GM10248 (cell line): ENCODE measurements at regions of chr7 and their contacts with region 1.

Region 1: GRCh38 chr7:148079206-148080080 is 511.1 kb upstream of the C7orf33 start:
- DNase-seq: no peak
- CTCF ChIP-seq: no peak

Region 2: GRCh38 chr7:148095066-148095465 is 15.6 kb after region 1 on chr7:
- CTCF ChIA-PET with region 1: interaction called, 3 read pairs
- POLR2A ChIA-PET with region 1: interaction called, 12 read pairs
- DNase-seq: no peak
- CTCF ChIP-seq: no peak

Region 3: GRCh38 chr7:148230296-148230695 is 150.9 kb after region 1 on chr7:
- CTCF ChIA-PET with region 1: no interaction called
- POLR2A ChIA-PET with region 1: no interaction called
- DNase-seq: no peak
- CTCF ChIP-seq: no peak